ENCODE measurements at regions of chr1 and their contacts with region 1.

Region 1: DNA sequence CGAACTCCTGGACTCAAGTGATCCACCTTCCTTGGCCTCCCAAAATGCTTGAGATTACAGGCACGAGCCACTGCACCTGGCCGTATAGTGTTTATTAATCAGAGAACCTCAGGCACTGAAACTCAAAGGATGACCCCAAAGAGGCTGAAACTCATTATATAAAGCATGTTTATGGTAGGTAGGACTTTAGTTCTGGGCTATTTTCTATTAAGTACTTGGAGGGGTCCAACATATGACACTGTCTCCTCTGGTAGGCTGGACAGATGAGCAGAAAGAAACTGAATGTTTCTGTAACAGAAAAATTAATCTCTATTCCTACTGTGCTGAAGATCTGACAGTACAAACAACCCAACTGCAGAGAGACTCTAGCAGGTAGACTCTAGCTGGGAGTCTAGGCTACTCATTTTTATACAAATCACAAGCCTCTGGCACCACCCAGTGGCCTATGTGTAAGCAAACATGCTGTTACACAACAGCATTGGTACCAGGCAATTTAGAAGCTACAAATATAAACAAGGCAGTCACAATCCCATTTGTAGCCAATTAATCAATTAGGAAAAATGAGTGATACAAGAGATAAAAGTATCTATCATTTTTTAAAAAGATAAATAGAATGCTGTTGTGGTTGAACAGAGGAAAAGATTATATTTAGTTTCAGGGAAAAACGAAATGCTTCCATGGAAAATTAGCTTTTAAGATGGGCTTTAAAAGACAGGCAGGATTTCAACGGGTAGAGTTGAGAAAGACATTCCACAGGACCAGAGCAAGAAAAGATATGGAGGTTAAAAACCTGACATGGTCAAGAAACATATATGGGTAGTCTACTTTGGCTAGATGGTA is 10.4 kb downstream of the DCAF8 start:
- DNase-seq: peak; percentile 22
- H3K4me3 Mint-ChIP-seq: no peak overlapping the region
- H3K27ac Mint-ChIP-seq: no peak overlapping the region
- H3K4me1 Mint-ChIP-seq: peaks cover 17% of the 10 kb centered on the region
- H3K27me3 Mint-ChIP-seq: no peaks in the 10 kb centered on the region

Region 2: GRCh38 chr1:160085686-160086455 is 166.0 kb before region 1 on chr1:
- intact Hi-C with region 1: loop called (anchors 1 kb)
- DNase-seq: peak; percentile 66
- H3K4me3 Mint-ChIP-seq: no peak overlapping the region
- H3K27ac Mint-ChIP-seq: no peak overlapping the region
- H3K4me1 Mint-ChIP-seq: peaks cover 6% of the 10 kb centered on the region
- H3K27me3 Mint-ChIP-seq: peaks cover 21% of the 10 kb centered on the region

Region 3: GRCh38 chr1:160193091-160193819 is 58.7 kb before region 1 on chr1:
- intact Hi-C with region 1: loop called (anchors 1 kb)
- DNase-seq: peak; percentile 60
- H3K4me3 Mint-ChIP-seq: no peak overlapping the region
- H3K27ac Mint-ChIP-seq: no peak overlapping the region
- H3K4me1 Mint-ChIP-seq: no peaks in the 10 kb centered on the region
- H3K27me3 Mint-ChIP-seq: no peaks in the 10 kb centered on the region

Region 4: GRCh38 chr1:160291248-160292220 is 39.6 kb after region 1 on chr1:
- intact Hi-C with region 1: loop called (anchors 5 kb)
- DNase-seq: peak; percentile 58
- H3K4me3 Mint-ChIP-seq: no peak overlapping the region
- H3K27ac Mint-ChIP-seq: no peak overlapping the region
- H3K4me1 Mint-ChIP-seq: no peaks in the 10 kb centered on the region
- H3K27me3 Mint-ChIP-seq: no peaks in the 10 kb centered on the region

Region 5: DNA sequence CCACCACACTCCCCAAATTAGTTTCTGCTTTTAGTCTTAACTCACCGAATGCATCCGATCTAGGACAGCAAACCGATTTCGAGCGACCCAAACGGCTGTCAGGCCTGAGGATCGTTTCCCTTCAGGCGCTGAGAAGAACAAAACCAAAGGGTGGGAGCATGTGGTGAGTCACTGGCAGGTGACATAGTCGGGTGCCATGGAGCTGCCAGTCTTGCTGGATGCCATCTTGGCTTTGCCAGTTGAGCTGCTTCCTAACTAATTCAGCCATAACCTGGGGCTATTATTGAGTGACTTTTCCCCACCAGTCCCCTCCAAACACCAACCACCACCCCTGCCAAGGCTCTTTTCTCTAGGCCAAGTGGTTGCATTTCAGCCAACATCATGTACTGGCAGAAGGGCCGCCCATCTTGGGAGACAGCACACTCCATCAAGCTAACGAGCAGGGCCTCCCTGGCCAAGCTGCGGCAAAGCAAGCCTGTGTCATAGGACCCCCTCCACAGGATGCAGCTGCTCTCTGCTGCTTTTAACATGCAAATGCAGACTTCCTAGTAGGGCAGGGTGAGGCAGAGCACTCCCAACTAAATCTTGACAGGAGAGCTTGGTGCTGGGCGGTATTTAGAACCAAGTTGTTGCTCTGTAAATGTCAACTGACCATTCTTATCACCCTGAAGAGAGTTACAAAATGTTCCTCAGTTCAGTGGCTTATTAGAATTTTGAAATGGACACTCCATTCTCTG is 55.4 kb after region 1 on chr1:
- intact Hi-C with region 1: no loop called
- DNase-seq: no peak
- H3K4me3 Mint-ChIP-seq: no peak overlapping the region
- H3K27ac Mint-ChIP-seq: no peak overlapping the region
- H3K4me1 Mint-ChIP-seq: no peaks in the 10 kb centered on the region
- H3K27me3 Mint-ChIP-seq: no peaks in the 10 kb centered on the region